HepG2 (cell line): ENCODE measurements at regions of chr1 and their contacts with region 1.

Region 1: GRCh38 chr1:145823565-145824498 is at the starts of genes POLR3C and RNF115:
- DNase-seq: peak; percentile 84
- ATAC-seq: peak; percentile 96
- H3K4me3 ChIP-seq: peak within 1 kb of the TSS; percentile 58 to 88 (median 73)
- H3K27ac ChIP-seq: peak within 1 kb of the TSS; percentile 93
- H3K4me1 ChIP-seq: peaks cover 14% of the 10 kb centered on the region
- H3K27me3 ChIP-seq: no peaks in the 10 kb centered on the region; a peak in 1 of 5 replicates
- CTCF ChIP-seq: 0 out of 2 replicates have a peak, but pooled peaks have one; percentile 10
- EP300 ChIP-seq: no peak
- POLR2A ChIP-seq: peak in 1 of 2 experiments; percentile 72; a peak in 3 of 4 replicates
- RAD21 ChIP-seq: peak; percentile 51; the same call in 1 of the 2 replicates
- total RNA-seq, gene POLR3C: 24.3 TPM in 2 replicates
- total RNA-seq, gene RNF115: 7.8 and 10.1 TPM in 2 replicates

Region 2: GRCh38 chr1:145730900-145731299 is 92.9 kb before region 1 on chr1:
- CTCF ChIA-PET with region 1: no interaction called
- POLR2A ChIA-PET with region 1: no interaction called
- in situ Hi-C with region 1: no loop called
- intact Hi-C with region 1: loop called (anchors 10 kb)
- DNase-seq: no peak
- ATAC-seq: peak; percentile 63
- H3K4me3 ChIP-seq: no peak overlapping the region
- H3K27ac ChIP-seq: no peak overlapping the region
- H3K4me1 ChIP-seq: peaks cover 15% of the 10 kb centered on the region
- H3K27me3 ChIP-seq: no peaks in the 10 kb centered on the region
- CTCF ChIP-seq: no peak; the same call in 1 of the 2 replicates
- EP300 ChIP-seq: no peak
- POLR2A ChIP-seq: no peak
- RAD21 ChIP-seq: no peak

Region 3: DNA sequence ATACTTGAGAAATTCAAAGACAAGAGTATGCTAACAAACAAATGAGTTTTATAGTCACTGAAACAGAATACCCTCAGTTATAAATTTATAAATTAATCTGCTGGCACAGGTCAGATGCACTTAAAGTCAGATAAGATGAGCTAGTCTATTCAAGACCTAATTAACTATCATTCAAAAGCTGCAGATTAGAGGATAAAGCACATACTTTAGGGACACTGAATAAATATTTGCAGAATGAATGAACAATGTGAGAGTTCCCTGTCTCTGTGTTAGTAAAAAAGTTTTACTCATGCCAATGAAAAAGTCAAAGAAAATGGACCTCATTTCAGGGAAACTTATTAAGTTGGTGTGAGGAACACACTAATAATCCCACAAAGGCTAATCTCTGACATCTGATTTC is 58.3 kb before region 1 on chr1:
- CTCF ChIA-PET with region 1: no interaction called
- POLR2A ChIA-PET with region 1: no interaction called
- in situ Hi-C with region 1: loop called (anchors 10 kb)
- intact Hi-C with region 1: no loop called
- DNase-seq: peak; percentile 32
- ATAC-seq: peak; percentile 46
- H3K4me3 ChIP-seq: no peak overlapping the region
- H3K27ac ChIP-seq: peak overlapping the region; percentile 13
- H3K4me1 ChIP-seq: peaks cover 20% of the 10 kb centered on the region
- H3K27me3 ChIP-seq: no peaks in the 10 kb centered on the region
- CTCF ChIP-seq: no peak
- EP300 ChIP-seq: no peak
- POLR2A ChIP-seq: no peak
- RAD21 ChIP-seq: no peak